ENCODE measurements at regions of chr2 and their contacts with region 1.

Region 1: DNA sequence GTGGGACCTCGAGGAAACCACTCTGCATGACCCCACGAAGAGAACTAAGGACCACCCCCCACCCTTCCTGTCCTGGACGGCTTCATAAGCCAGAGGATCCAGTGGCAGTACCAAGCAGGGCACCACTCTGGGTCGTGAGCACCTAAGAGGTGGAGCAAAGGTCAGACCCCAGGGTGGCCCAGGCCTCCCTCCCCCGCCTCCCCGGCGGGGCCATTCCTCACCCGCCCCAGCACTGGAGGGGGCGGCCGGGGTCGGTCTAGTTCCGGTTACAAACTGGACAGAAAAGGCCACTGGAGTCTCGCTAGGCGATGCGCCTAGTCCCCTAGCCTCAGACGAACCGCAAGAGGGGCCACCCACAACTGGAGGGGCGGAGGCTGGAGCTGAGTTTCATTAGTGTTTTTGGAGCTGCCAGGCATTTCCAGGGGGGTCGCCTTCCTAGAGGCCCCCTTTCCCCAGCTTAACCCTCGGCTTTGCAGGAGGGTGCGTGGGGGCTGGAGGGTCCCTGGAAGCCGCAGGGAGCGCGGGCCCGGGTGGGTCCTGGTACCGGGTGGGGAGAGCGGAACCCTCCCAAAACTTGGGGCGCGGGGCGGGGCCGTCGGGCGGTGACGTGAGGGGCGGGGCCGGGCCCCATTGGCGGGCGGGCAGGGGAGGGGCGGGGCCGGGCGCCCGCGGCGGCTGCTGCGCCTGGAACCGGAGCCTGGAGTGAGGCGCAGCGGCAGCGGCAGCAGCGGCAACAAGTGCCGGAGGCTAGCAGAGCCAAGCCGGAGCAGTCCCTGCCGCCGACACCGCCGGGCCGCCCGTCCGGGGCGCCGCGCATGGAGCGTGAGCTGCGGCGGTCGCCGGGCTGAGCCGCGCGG is at the start of gene B3GNT2:
- DNase-seq: peak; percentile 79 to 84 (median 80)
- H3K4me3 ChIP-seq: peak within 1 kb of the TSS; percentile 84 to 86
- H3K4me3 Mint-ChIP-seq: peak within 1 kb of the TSS; percentile 84 to 92 (median 90)
- H3K27ac ChIP-seq: peak within 1 kb of the TSS; percentile 80
- H3K27ac Mint-ChIP-seq: peak within 1 kb of the TSS; percentile 72 to 95 (median 87)
- H3K4me1 ChIP-seq: peaks cover 41% of the 10 kb centered on the region
- H3K4me1 Mint-ChIP-seq: peaks cover 27 to 35% (median 30%) of the 10 kb centered on the region in 4 donors
- H3K27me3 ChIP-seq: no peaks in the 10 kb centered on the region
- H3K27me3 Mint-ChIP-seq: no peaks in the 10 kb centered on the region
- total RNA-seq, gene B3GNT2: 18.3 to 18.8 TPM

Region 2: GRCh38 chr2:60945341-60945740 is 1250.3 kb before region 1 on chr2:
- CTCF ChIA-PET with region 1: no interaction called
- POLR2A ChIA-PET with region 1: no interaction called
- intact Hi-C with region 1: no loop called
- DNase-seq: no peak
- H3K4me3 ChIP-seq: no peak overlapping the region
- H3K4me3 Mint-ChIP-seq: no peak overlapping the region
- H3K27ac ChIP-seq: no peak overlapping the region
- H3K27ac Mint-ChIP-seq: no peak overlapping the region
- H3K4me1 ChIP-seq: peaks cover 12% of the 10 kb centered on the region
- H3K4me1 Mint-ChIP-seq: peaks cover 4 to 17% (median 11%) of the 10 kb centered on the region in 4 donors
- H3K27me3 ChIP-seq: no peaks in the 10 kb centered on the region
- H3K27me3 Mint-ChIP-seq: no peaks in the 10 kb centered on the region

Region 3: DNA sequence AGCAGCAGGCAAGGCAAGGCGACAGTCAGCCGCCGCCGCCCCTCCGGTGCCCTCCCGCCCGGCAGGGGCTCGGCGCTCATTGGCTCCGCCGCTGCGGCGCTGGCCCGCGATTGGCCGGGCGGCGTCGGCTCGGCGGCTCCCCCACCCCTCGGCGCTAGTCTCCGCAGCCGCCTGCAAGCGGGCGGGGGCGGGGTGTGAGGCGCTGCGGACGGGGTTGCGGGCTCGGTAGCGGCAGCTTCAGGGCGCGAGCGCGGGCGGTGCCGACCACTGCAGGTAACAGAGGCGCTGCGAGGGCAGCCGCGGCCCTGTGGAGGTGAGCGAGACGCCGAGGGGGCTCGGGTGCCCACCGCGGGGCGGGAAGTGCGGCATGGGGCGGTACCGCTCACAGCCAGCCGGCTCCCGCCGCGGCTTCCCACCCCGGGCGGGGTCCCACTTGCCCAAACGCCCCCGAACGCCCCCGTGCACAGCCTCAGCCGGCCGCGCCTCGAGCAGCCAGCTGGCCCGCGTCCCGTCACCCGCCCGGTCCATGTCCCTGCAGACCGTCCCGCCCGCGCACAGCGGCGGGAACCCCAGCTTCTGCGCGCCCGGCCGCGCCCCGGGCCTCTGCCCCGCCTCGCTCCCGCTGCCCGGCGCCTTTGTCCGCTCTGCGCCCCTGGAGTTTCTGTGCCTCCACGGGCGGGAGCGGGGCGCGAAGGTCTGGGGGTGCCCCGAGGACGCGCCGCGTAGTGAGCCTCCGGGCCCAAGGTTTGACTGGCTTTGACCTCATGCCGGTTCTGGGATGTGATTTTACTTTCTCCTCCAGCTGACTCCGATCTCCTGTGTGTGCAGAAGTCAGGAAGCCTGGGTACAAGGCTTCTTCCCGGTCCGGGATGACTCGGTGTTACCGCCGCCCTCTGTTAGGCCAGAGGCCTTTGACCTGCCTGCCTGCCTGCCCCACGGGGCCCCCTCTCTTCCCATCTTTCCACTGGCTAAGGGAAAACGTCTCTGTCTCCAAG is 1129.6 kb before region 1 on chr2 and contains the start of gene SANBR:
- CTCF ChIA-PET with region 1: no interaction called
- POLR2A ChIA-PET with region 1: no interaction called
- intact Hi-C with region 1: loop called (anchors 5 kb)
- DNase-seq: peak; percentile 83 to 88 (median 86)
- H3K4me3 ChIP-seq: peak within 1 kb of the TSS; percentile 50 to 59
- H3K4me3 Mint-ChIP-seq: peak within 1 kb of the TSS; percentile 93 to 98 (median 97)
- H3K27ac ChIP-seq: peak within 1 kb of the TSS; percentile 51
- H3K27ac Mint-ChIP-seq: peak within 1 kb of the TSS; percentile 89 to 95 (median 93)
- H3K4me1 ChIP-seq: peaks cover 8% of the 10 kb centered on the region
- H3K4me1 Mint-ChIP-seq: peaks cover 7 to 16% (median 8%) of the 10 kb centered on the region in 4 donors
- H3K27me3 ChIP-seq: no peaks in the 10 kb centered on the region
- H3K27me3 Mint-ChIP-seq: no peaks in the 10 kb centered on the region
- total RNA-seq, gene SANBR: 5.4 to 6.0 TPM

Region 4: DNA sequence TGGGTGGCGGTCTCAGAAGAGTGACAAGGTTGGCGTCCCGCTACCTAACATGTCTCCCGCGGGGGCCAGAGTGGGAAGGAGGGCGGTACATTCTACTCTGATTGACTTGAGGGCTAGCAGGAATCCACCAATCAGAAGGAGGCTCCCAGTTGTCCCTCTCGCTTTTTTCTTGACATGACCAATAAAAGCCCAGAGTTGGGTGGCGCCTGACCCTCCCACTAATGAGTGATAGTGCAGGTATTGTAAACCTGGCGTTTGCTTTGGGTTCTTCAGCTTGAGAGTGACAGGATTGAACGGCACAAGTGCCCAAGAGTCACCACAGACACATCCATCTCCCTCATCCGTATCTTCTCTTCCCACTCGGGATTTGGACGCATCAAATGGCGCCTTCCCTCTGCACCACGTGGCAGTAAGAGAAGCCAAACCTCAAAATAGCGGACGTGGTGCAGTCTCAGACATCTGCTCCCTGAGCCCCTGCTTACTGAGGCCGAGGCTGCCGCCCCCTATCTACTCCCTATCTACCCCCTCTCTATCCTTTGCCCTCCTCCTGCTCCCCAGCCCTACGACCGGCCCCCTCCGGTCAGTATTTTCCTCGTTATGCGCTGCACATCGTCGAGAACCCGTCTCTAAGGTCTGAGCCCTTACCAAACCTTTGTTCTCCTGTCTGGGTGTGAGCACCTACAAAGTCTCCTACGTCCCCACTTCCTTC is 341.0 kb before region 1 on chr2:
- CTCF ChIA-PET with region 1: no interaction called
- POLR2A ChIA-PET with region 1: interaction called, 4 read pairs
- intact Hi-C with region 1: loop called (anchors 1 kb)
- DNase-seq: peak; percentile 92 to 98 (median 94)
- H3K4me3 ChIP-seq: peak overlapping the region; percentile 85 to 95
- H3K4me3 Mint-ChIP-seq: peak overlapping the region; percentile 94 to 99 (median 96)
- H3K27ac ChIP-seq: peak overlapping the region; percentile 69
- H3K27ac Mint-ChIP-seq: peak overlapping the region; percentile 87 to 98 (median 95)
- H3K4me1 ChIP-seq: peaks cover 16% of the 10 kb centered on the region
- H3K4me1 Mint-ChIP-seq: peaks cover 7 to 25% (median 16%) of the 10 kb centered on the region in 4 donors
- H3K27me3 ChIP-seq: no peaks in the 10 kb centered on the region
- H3K27me3 Mint-ChIP-seq: no peaks in the 10 kb centered on the region

Region 5: GRCh38 chr2:61905372-61906185 is 290.1 kb before region 1 on chr2 and contains the start of gene COMMD1:
- CTCF ChIA-PET with region 1: no interaction called
- POLR2A ChIA-PET with region 1: interaction called, 4 read pairs
- intact Hi-C with region 1: loop called (anchors 5 kb)
- DNase-seq: peak; percentile 75 to 81 (median 78)
- H3K4me3 ChIP-seq: peak within 1 kb of the TSS; percentile 94 to 99
- H3K4me3 Mint-ChIP-seq: peak within 1 kb of the TSS; percentile 96 to 98 (median 97)
- H3K27ac ChIP-seq: peak within 1 kb of the TSS; percentile 75
- H3K27ac Mint-ChIP-seq: peak within 1 kb of the TSS; percentile 75 to 95 (median 92)
- H3K4me1 ChIP-seq: peaks cover 21% of the 10 kb centered on the region
- H3K4me1 Mint-ChIP-seq: peaks cover 12 to 39% (median 26%) of the 10 kb centered on the region in 4 donors
- H3K27me3 ChIP-seq: no peaks in the 10 kb centered on the region
- H3K27me3 Mint-ChIP-seq: no peaks in the 10 kb centered on the region
- total RNA-seq, gene COMMD1: 16.7 to 17.8 TPM

Region 6: GRCh38 chr2:62178741-62179271 is 16.8 kb before region 1 on chr2:
- CTCF ChIA-PET with region 1: no interaction called
- POLR2A ChIA-PET with region 1: no interaction called
- intact Hi-C with region 1: no loop called
- DNase-seq: no peak
- H3K4me3 ChIP-seq: no peak overlapping the region
- H3K4me3 Mint-ChIP-seq: no peak overlapping the region
- H3K27ac ChIP-seq: no peak overlapping the region
- H3K27ac Mint-ChIP-seq: no peak overlapping the region
- H3K4me1 ChIP-seq: no peaks in the 10 kb centered on the region
- H3K4me1 Mint-ChIP-seq: peaks cover 0 to 2% (median under 1%) of the 10 kb centered on the region in 4 donors
- H3K27me3 ChIP-seq: no peaks in the 10 kb centered on the region
- H3K27me3 Mint-ChIP-seq: no peaks in the 10 kb centered on the region

Region 7: DNA sequence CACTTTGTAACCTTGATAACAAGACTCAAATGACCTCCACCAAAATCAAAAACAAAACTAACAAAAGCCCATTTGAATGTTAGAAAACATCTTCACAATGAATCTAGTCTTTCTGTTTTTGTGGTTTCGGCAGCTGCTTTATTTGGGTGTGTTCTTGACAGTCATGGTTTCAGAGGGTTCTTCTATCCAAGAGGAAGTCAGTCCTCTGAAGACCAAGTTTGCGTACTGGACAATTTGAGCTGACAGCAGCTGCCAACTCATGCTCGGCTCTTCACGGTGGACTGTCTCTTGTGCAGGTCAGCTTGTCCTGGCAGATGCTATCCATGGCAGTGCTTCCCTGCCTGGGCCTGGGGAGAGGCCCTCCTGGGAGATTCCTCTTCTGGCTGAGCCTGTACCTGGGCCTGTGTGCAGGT is 219.4 kb after region 1 on chr2:
- CTCF ChIA-PET with region 1: interaction called, 5 read pairs
- POLR2A ChIA-PET with region 1: no interaction called
- intact Hi-C with region 1: loop called (anchors 5 kb)
- DNase-seq: no peak
- H3K4me3 ChIP-seq: no peak overlapping the region
- H3K4me3 Mint-ChIP-seq: no peak overlapping the region
- H3K27ac ChIP-seq: no peak overlapping the region
- H3K27ac Mint-ChIP-seq: peak overlapping the region in 2 of 7 donors; percentile 32 to 46
- H3K4me1 ChIP-seq: peaks cover 4% of the 10 kb centered on the region
- H3K4me1 Mint-ChIP-seq: peaks cover 0 to 17% (median 2%) of the 10 kb centered on the region in 4 donors
- H3K27me3 ChIP-seq: no peaks in the 10 kb centered on the region
- H3K27me3 Mint-ChIP-seq: peaks cover 0 to 3% of the 10 kb centered on the region in 2 donors

Region 8: DNA sequence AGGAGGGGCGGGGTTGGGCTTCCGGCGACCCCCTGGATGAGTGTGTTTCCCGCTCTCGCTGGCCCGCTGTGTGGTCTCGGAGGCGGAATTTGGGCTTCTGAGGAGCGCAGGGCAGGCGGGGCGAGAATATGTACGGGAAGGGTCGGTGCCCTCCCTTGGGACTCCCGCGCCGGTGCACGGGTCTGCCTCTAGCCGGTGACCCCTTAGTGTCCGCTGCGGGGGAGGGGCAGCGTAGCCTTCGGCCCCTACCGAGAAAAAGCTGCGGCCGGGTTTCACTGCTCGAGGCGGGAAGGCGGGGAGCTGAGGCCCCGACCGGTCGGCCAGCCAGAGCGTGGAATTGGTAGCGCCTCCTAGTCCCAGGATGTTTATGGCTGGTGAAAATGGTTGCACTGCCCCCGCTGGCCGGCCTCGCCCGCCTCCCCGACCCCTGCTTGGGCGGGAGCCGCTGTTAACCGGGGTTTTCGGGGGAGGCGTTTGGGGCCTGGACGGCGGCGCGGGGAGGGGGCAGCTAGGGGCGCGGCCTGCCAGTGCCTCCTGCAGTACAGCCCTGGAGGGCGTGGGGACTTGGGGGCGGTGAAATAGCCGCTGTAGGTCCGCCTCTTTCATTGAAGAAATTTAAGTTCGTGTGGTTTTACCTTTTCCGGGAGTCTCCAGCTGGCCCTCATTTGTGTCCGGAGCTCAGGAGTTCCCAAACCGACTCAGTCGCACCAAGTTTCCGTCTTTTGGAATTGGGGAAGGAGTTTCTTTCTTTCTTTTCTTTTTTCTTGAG is 1645.8 kb after region 1 on chr2 and contains the start of gene UGP2:
- CTCF ChIA-PET with region 1: no interaction called
- POLR2A ChIA-PET with region 1: no interaction called
- intact Hi-C with region 1: loop called (anchors 5 kb)
- DNase-seq: peak; percentile 82 to 94 (median 83)
- H3K4me3 ChIP-seq: peak within 1 kb of the TSS; percentile 63 to 85
- H3K4me3 Mint-ChIP-seq: peak within 1 kb of the TSS; percentile 96 to 100 (median 98)
- H3K27ac ChIP-seq: peak within 1 kb of the TSS; percentile 71
- H3K27ac Mint-ChIP-seq: peak within 1 kb of the TSS; percentile 95 to 100 (median 97)
- H3K4me1 ChIP-seq: peaks cover 44% of the 10 kb centered on the region
- H3K4me1 Mint-ChIP-seq: peaks cover 38 to 63% (median 51%) of the 10 kb centered on the region in 4 donors
- H3K27me3 ChIP-seq: no peaks in the 10 kb centered on the region
- H3K27me3 Mint-ChIP-seq: no peaks in the 10 kb centered on the region
- total RNA-seq, gene UGP2: 77.6 to 92.7 TPM

Measured in CD4-positive, alpha-beta memory T cell (primary cell).